Posterior vena cava (tissue), 2 donors: ENCODE measurements at regions of chr1 and their contacts with region 1.

Region 1: GRCh38 chr1:5874416-5875110 is 117.7 kb downstream of the NPHP4 start:
- DNase-seq: no peak

Region 2: DNA sequence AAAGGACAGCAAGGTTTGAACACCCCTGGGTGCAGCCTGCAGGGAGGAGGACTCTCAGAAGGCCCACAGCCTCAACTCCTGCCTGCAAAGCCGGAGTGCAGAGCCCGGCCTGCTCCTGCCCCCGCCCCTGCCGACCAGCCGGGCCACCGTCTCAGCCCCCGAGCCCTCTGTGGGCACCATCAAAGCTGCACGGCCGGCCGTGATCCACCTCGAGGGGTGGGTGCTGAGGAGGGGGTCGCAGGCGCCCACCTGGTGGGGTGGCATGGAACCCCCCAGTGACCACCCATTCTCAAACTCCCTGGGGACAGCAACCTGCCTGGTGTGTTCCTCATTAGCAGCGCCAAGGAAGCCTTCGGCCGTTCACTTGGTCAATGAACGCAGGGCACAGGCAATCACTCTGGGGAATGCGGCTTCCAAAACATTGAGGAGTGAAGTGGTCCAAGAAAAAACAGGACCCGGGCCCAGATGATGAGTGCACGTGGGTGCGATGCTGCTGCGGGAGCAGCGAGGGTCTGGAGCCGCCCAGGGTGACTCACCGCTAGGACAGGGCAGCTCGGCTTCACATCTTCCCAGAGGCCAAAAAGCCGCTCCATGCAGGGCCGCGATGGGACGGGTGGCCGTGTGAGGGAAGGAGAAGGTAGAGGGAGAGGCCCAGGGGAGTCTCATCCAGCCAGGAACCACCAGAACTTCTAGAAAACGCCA is 39.9 kb before region 1 on chr1:
- intact Hi-C with region 1: loop called in 1 of 2 experiments (anchors 1 kb)
- DNase-seq: no peak